ENCODE measurements at regions of chr5 and their contacts with region 1.

Region 1: DNA sequence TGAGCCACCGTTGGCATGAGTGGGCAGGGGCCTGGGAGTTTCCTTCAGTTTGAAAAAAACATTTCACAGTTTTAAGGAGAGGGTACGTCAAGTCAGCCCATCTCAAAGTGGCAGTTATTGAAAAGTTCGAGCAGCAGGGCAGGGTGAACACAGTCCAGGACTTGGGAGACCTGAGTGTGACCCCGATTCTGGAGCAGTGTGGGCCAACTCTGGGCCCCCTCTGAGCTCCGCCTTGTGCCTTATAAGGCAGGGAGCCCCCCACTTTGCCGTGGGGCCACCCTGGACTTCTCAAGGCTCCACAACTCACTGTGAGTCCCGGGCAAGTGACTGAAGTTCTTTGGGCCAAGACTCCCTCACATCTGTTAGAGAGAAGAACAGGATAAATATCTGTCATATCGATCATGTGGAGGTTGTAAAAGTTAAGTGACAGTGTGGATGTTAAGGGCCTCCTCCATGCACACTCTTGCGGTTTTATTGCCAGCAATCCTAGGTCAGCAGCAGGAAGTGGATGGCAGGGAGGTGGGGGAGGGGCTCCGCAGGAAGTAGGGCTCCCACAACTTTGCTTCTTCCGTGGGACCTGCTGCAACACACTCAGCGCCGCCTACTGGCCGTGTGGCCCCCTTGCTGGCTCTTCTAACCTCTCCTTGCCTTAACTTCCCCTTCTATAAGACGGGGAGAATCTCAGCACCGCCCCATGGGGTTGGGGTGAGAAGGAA is 38.4 kb downstream of the HRH2 start:
- DNase-seq: peak; percentile 68 to 84
- H3K4me3 ChIP-seq: no peak overlapping the region
- H3K27ac ChIP-seq: 0 out of 2 replicates have a peak overlapping the region, but pooled peaks have one; percentile 0
- H3K4me1 ChIP-seq: peaks cover 0 to 10% (median 4%) of the 10 kb centered on the region in 4 experiments; a peak in 5 of 7 replicates
- H3K27me3 ChIP-seq: no peaks in the 10 kb centered on the region; a peak in 1 of 7 replicates
- CTCF ChIP-seq: peak in 2 of 3 experiments; percentile 91 to 96; a peak in 3 of 4 replicates
- EP300 ChIP-seq: peak in 1 of 2 experiments; percentile 67; a peak in 1 of 3 replicates
- POLR2A ChIP-seq: no peak
- RAD21 ChIP-seq: peak; percentile 76 to 85

Region 2: GRCh38 chr5:175444060-175444904 is 252.0 kb before region 1 on chr5 and contains the start of gene DRD1:
- CTCF ChIA-PET with region 1: no interaction called
- POLR2A ChIA-PET with region 1: no interaction called
- DNase-seq: peak in 1 of 2 experiments; percentile 95
- H3K4me3 ChIP-seq: peak within 1 kb of the TSS; percentile 26 to 67 (median 52)
- H3K27ac ChIP-seq: no peak within 1 kb of the TSS
- H3K4me1 ChIP-seq: peaks cover 3 to 12% (median 8%) of the 10 kb centered on the region in 4 experiments; a peak in 6 of 7 replicates
- H3K27me3 ChIP-seq: peaks cover 11 to 42% (median 38%) of the 10 kb centered on the region in 4 experiments
- CTCF ChIP-seq: peak; percentile 75 to 95 (median 77)
- EP300 ChIP-seq: no peak
- POLR2A ChIP-seq: no peak
- RAD21 ChIP-seq: peak; percentile 85 to 95
- total RNA-seq, gene DRD1: 0.08 and 0.19 TPM in 2 replicates

Region 3: DNA sequence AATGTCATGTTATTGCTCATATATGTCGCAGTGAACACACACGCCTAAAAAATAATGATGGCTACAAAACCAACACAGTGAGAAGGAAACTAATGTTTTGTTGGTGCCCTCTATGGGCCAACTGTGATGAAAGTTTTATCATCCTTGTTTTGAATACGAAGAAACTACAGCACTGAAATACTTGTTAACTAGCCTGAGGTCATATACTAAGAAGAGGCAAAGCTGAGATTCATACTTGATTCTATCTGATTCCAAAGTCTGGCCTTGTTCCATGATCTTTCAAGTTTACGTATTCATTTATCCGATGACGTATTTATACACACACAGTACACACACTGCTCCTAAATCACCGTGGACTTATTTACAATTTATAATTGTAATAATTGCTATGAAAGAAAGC is 236.2 kb before region 1 on chr5:
- CTCF ChIA-PET with region 1: no interaction called
- POLR2A ChIA-PET with region 1: no interaction called
- DNase-seq: no peak
- H3K4me3 ChIP-seq: no peak overlapping the region
- H3K27ac ChIP-seq: no peak overlapping the region
- H3K4me1 ChIP-seq: no peaks in the 10 kb centered on the region; a peak in 1 of 7 replicates
- H3K27me3 ChIP-seq: no peaks in the 10 kb centered on the region
- CTCF ChIP-seq: peak in 1 of 3 experiments; percentile 49; a peak in 2 of 4 replicates
- EP300 ChIP-seq: no peak
- POLR2A ChIP-seq: no peak
- RAD21 ChIP-seq: peak; percentile 58 to 59

Region 4: DNA sequence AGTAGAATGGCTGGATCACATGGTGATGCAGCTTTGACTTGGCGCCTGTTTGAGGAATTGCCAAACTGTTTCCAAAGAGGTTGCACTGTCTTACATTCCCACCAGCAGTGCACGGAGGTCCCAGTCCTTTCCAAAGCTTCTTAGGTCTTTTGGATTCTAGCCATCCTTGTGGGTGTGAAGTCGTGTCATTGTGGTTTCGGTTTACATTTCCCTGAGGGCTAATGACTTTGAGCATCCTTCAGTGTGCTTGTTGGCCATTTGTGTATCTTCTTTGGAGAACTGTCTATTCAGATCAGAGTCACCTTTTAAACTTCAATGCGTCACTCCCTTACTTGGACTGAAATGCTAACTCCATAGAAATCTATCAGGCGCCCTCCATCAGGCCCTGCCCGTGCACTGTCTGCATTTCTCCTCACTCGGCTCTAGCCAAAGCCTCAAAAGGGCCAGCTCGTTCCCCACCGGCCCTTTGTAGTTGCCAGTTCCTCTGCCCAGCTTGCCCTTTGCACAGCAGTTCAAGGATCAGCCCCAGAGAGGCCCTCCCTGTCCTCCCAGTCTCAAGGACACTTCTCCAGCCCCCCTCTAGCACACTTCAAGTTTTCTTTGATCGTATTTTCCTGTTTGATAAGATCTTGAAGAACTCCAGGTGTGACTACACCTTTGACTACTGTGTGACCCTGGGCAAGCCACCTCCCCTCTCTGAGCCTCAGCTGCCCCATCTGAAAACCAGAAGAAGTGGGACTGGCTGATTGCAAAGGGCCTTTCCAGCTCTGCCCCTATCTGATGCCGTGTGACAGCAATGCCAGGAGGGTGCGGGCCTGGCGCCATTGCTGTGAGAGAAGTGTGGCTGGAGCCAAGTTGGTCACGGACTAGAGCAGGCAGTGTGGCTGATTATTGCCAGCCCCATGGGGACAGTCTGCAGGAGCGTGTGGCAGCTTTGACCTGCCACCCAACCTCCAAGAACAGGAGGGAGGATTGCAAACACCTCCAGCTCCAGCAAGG is 32.8 kb before region 1 on chr5:
- CTCF ChIA-PET with region 1: interaction called, 10 read pairs
- POLR2A ChIA-PET with region 1: no interaction called
- DNase-seq: no peak
- H3K4me3 ChIP-seq: no peak overlapping the region
- H3K27ac ChIP-seq: no peak overlapping the region
- H3K4me1 ChIP-seq: peaks cover 0 to 6% (median 2%) of the 10 kb centered on the region in 4 experiments; a peak in 5 of 7 replicates
- H3K27me3 ChIP-seq: peaks cover 0 to 3% (median 0%) of the 10 kb centered on the region in 4 experiments; a peak in 1 of 7 replicates
- CTCF ChIP-seq: no peak
- EP300 ChIP-seq: no peak
- POLR2A ChIP-seq: no peak
- RAD21 ChIP-seq: no peak

Region 5: DNA sequence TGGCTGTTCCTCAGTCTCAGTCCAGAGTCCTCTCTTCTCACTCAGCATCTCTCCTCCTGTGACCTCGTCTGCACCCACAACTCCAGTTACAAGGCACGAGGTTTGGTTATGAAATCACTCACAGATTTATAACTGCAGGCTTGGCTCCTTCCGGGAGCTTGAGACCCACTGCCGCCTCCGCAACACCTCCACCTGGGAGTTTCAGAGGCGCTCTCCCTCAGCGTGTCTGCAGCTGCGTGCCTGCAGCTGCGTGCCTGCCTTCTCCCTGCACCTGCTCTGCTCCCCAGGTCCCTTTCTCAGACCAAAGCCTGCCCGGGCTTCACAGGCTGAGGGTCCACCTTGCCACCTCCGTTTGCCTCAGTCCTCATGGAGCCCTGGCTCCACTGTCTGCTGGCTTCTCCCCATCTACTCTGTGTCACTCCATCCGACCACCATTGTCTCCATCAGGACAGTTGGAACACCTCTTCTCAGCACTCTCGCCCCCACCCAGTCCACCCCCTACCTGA is 13.0 kb after region 1 on chr5:
- CTCF ChIA-PET with region 1: interaction called, 14 read pairs
- POLR2A ChIA-PET with region 1: no interaction called
- DNase-seq: no peak
- H3K4me3 ChIP-seq: no peak overlapping the region
- H3K27ac ChIP-seq: no peak overlapping the region
- H3K4me1 ChIP-seq: no peaks in the 10 kb centered on the region
- H3K27me3 ChIP-seq: peaks cover 0 to 6% (median 0%) of the 10 kb centered on the region in 4 experiments; a peak in 1 of 7 replicates
- CTCF ChIP-seq: no peak
- EP300 ChIP-seq: no peak
- POLR2A ChIP-seq: no peak
- RAD21 ChIP-seq: no peak

Region 6: DNA sequence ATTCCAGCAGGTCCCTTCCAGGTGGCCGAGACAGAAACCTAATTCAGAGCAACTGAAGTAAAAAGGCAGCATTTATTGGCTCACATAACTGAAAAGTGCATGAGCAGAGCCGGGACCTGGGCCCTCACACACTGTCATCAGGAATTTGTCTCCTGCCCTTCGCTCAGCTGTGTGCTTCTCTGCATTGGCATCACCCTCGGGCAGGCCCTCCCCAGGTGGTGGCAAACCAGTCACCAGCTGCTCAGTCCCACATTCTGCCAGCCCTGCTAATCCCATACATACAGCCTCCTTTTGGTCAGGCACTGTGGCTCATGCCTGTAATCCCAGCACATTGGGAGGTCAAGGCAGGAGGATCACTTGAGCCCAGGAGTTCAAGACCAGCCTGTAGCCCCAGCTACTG is 163.6 kb after region 1 on chr5:
- CTCF ChIA-PET with region 1: no interaction called
- POLR2A ChIA-PET with region 1: no interaction called
- DNase-seq: no peak
- H3K4me3 ChIP-seq: no peak overlapping the region
- H3K27ac ChIP-seq: no peak overlapping the region
- H3K4me1 ChIP-seq: peaks cover 0 to 3% (median 0%) of the 10 kb centered on the region in 4 experiments; a peak in 2 of 7 replicates
- H3K27me3 ChIP-seq: no peaks in the 10 kb centered on the region
- CTCF ChIP-seq: no peak
- EP300 ChIP-seq: no peak
- POLR2A ChIP-seq: no peak
- RAD21 ChIP-seq: no peak

Region 7: GRCh38 chr5:175880797-175881312 is 184.6 kb after region 1 on chr5:
- CTCF ChIA-PET with region 1: no interaction called
- POLR2A ChIA-PET with region 1: no interaction called
- DNase-seq: no peak
- H3K4me3 ChIP-seq: no peak overlapping the region
- H3K27ac ChIP-seq: no peak overlapping the region; the same call in 1 of the 2 replicates
- H3K4me1 ChIP-seq: peaks cover 0 to 13% (median 1%) of the 10 kb centered on the region in 4 experiments; a peak in 6 of 7 replicates
- H3K27me3 ChIP-seq: no peaks in the 10 kb centered on the region; a peak in 2 of 7 replicates
- CTCF ChIP-seq: no peak
- EP300 ChIP-seq: no peak
- POLR2A ChIP-seq: no peak
- RAD21 ChIP-seq: no peak

Measured in H1 (cell line).